B cell (primary cell): ENCODE measurements at regions of chr5 and their contacts with region 1.

Region 1: DNA sequence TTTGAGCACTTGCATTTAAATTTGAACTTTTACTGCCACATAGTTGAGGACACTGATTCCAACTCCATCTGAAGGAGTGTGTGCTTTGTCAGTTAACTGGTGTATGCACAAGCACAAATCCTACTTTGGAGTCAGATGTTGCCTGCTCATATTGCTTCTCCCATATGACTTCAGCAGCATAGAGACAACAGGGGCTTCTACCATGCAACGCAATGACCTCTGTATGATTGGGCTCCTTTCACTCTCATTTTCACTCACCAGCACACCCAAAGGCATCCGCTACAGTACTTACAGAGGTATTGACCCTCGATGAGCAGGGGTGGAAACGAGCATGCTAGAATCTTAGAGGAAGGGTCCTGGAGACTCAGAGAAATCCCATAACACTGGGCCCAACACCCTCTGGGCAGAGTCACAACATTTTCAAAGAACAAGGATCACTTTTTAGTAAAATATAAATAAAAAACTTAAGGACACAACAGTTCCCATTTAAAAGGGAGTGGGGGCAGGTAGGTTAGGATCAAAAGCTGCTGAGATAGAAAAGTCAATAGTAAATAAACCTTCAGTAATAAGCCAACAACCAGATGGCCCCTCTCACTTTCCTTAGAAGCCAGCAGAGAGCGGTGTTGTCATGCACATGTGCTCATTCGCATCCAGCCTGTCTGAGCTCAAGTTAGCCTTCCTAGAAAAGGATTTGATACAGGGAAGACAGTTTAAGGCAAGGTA is 203.8 kb downstream of the SNCAIP start:
- DNase-seq: peak; percentile 77
- ATAC-seq: peak; percentile 73
- H3K4me3 ChIP-seq: no peak overlapping the region
- H3K4me3 Mint-ChIP-seq: no peak overlapping the region
- H3K27ac ChIP-seq: no peak overlapping the region
- H3K27ac Mint-ChIP-seq: no peak overlapping the region
- H3K4me1 ChIP-seq: peaks cover 0 to 3% of the 10 kb centered on the region in 2 donors
- H3K4me1 Mint-ChIP-seq: peaks cover 4% of the 10 kb centered on the region
- H3K27me3 ChIP-seq: peaks cover 0 to 4% (median 0%) of the 10 kb centered on the region in 4 experiments
- H3K27me3 Mint-ChIP-seq: peaks cover 4% of the 10 kb centered on the region
- CTCF ChIP-seq: peak; percentile 89

Region 2: DNA sequence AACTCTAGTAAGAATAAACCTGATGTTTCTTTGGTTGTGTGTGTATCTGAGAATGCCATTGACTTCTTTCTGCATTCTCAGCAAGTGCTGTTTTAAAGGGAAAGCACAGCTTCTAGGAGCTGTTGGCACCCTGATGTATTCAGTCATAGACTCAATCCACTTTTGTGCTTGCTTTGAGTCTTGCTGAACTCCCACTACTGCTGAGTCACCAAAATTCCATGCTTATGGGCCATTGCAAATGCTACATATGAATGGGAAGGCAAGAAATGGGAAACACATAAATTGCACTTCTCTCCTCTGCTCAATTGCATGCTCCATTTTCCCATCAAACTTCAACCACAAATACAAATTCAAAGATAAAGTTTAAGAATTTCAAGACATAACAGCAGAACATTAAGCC is 674.0 kb before region 1 on chr5:
- CTCF ChIA-PET with region 1: no interaction called
- POLR2A ChIA-PET with region 1: no interaction called
- intact Hi-C with region 1: no loop called
- DNase-seq: no peak
- ATAC-seq: no peak
- H3K4me3 ChIP-seq: no peak overlapping the region
- H3K4me3 Mint-ChIP-seq: no peak overlapping the region
- H3K27ac ChIP-seq: no peak overlapping the region
- H3K27ac Mint-ChIP-seq: no peak overlapping the region
- H3K4me1 ChIP-seq: no peaks in the 10 kb centered on the region
- H3K4me1 Mint-ChIP-seq: no peaks in the 10 kb centered on the region
- H3K27me3 ChIP-seq: no peaks in the 10 kb centered on the region
- H3K27me3 Mint-ChIP-seq: no peaks in the 10 kb centered on the region
- CTCF ChIP-seq: no peak

Region 3: DNA sequence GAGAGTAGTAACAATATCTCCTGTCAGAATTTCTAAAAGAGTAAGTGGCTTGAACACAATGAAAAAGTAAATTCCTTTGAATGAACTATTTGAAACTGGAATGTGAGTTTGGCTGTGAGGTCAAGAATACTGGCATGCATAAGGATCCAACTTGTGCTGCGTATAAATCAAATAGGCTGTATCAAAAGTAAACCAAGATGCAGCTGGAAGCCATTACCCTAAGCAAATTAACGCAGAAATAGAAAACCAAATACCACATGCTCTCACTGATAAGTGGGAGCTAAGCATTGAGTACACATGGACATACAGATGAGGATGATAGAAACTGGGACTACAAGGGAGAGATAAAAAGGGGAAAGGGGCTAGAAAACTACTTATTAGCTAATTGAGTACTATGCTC is 578.1 kb before region 1 on chr5:
- CTCF ChIA-PET with region 1: no interaction called
- POLR2A ChIA-PET with region 1: no interaction called
- intact Hi-C with region 1: no loop called
- DNase-seq: no peak
- ATAC-seq: no peak
- H3K4me3 ChIP-seq: no peak overlapping the region
- H3K4me3 Mint-ChIP-seq: no peak overlapping the region
- H3K27ac ChIP-seq: no peak overlapping the region
- H3K27ac Mint-ChIP-seq: no peak overlapping the region
- H3K4me1 ChIP-seq: no peaks in the 10 kb centered on the region
- H3K4me1 Mint-ChIP-seq: no peaks in the 10 kb centered on the region
- H3K27me3 ChIP-seq: peaks cover 0 to 8% (median 0%) of the 10 kb centered on the region in 4 experiments
- H3K27me3 Mint-ChIP-seq: peaks cover 34% of the 10 kb centered on the region
- CTCF ChIP-seq: no peak

Region 4: DNA sequence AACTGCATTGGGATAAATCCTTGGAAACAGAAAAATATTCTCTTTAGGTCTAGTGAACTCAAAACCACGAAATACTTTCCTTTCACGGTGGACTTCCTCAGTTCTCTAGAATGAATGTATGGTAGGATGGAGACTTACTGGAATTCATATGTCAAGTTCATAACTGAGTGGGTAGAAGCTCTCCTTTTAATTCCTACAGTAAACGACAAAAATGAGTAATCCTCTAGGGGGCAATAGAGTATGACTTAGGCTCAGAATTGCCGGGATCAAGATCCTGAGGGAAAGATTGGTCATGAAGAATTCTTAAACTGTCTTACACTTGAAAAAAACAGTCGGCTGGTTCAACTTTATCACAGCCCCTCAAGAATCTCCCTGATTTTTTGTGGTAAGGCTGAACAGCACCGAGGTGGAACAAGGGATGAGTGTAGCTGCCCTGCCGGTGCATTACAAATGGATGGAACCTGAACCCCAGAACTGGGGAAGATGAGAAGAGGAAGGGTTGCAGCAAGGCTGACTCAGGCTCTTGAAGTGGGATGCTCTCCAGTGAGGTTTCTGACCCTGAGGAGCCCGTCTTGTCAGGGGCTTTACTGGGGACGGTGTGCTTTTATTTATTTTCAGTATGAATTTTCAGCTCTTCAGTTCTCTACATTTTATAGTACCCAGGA is 423.8 kb before region 1 on chr5:
- CTCF ChIA-PET with region 1: no interaction called
- POLR2A ChIA-PET with region 1: no interaction called
- intact Hi-C with region 1: no loop called
- DNase-seq: no peak
- ATAC-seq: no peak
- H3K4me3 ChIP-seq: no peak overlapping the region
- H3K4me3 Mint-ChIP-seq: no peak overlapping the region
- H3K27ac ChIP-seq: no peak overlapping the region
- H3K27ac Mint-ChIP-seq: no peak overlapping the region
- H3K4me1 ChIP-seq: no peaks in the 10 kb centered on the region
- H3K4me1 Mint-ChIP-seq: no peaks in the 10 kb centered on the region
- H3K27me3 ChIP-seq: peaks cover 0 to 3% (median 0%) of the 10 kb centered on the region in 4 experiments
- H3K27me3 Mint-ChIP-seq: peaks cover 14% of the 10 kb centered on the region
- CTCF ChIP-seq: no peak

Region 5: DNA sequence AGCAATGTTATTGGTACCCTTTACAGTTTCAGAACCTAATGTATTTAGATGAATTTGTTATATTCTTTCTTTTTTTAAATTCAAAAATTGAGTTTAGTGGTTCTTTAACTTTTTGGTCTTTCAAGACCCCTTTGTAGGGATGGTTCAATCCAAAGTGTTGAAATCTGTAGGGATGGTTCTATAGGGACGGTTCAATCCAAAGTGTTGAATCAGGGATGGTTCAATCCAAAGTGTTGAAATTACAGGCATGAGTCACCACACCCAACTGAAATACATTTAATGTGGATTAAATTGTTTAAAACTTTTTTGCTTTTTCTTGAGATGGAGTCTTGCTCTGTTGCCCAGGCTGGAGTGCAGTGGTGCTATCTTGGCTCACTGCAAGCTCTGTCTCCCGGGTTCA is 289.6 kb after region 1 on chr5:
- CTCF ChIA-PET with region 1: no interaction called
- POLR2A ChIA-PET with region 1: no interaction called
- intact Hi-C with region 1: loop called (anchors 2 kb)
- DNase-seq: no peak
- ATAC-seq: no peak
- H3K4me3 ChIP-seq: no peak overlapping the region
- H3K4me3 Mint-ChIP-seq: no peak overlapping the region
- H3K27ac ChIP-seq: no peak overlapping the region
- H3K27ac Mint-ChIP-seq: no peak overlapping the region
- H3K4me1 ChIP-seq: no peaks in the 10 kb centered on the region
- H3K4me1 Mint-ChIP-seq: peaks cover 12% of the 10 kb centered on the region
- H3K27me3 ChIP-seq: no peaks in the 10 kb centered on the region
- H3K27me3 Mint-ChIP-seq: no peaks in the 10 kb centered on the region
- CTCF ChIP-seq: no peak

Region 6: DNA sequence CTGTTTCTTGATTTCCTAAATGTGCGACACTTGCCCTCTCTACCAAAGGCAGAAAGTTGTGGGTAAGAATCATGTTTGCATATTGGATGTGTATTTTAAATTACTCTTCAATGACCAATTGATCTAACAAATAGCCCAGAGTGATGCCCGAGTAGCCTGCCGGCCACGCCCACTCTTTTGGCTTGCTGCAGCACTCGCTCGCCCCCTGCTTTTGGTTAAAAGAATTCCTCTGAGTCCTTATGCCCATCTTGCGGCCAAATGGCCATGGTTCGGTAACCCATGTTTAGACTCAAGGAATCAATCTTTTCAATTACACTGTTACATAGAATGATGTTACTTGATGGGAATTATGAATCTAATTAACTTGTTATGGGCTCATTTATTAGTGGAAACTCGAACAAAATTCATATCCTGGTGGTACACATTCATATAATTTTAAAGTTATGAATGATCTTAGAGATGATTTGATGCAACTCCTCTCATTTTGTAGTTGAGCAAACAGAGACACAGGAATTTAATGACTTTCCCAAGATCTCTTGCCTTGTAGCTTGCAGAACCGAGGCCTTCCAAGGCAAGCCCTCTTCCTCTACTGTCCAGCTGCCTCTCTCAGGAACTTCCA is 484.2 kb after region 1 on chr5:
- CTCF ChIA-PET with region 1: interaction called, 13 read pairs
- POLR2A ChIA-PET with region 1: no interaction called
- intact Hi-C with region 1: loop called (anchors 2 kb)
- DNase-seq: peak; percentile 64
- ATAC-seq: peak; percentile 73
- H3K4me3 ChIP-seq: no peak overlapping the region
- H3K4me3 Mint-ChIP-seq: no peak overlapping the region
- H3K27ac ChIP-seq: no peak overlapping the region
- H3K27ac Mint-ChIP-seq: no peak overlapping the region
- H3K4me1 ChIP-seq: no peaks in the 10 kb centered on the region
- H3K4me1 Mint-ChIP-seq: no peaks in the 10 kb centered on the region
- H3K27me3 ChIP-seq: no peaks in the 10 kb centered on the region
- H3K27me3 Mint-ChIP-seq: no peaks in the 10 kb centered on the region
- CTCF ChIP-seq: peak; percentile 72

Region 7: GRCh38 chr5:123344816-123345426 is 829.1 kb after region 1 on chr5:
- CTCF ChIA-PET with region 1: interaction called, 3 read pairs
- POLR2A ChIA-PET with region 1: no interaction called
- intact Hi-C with region 1: loop called (anchors 2 kb)
- DNase-seq: peak; percentile 17
- ATAC-seq: no peak
- H3K4me3 ChIP-seq: no peak overlapping the region
- H3K4me3 Mint-ChIP-seq: no peak overlapping the region
- H3K27ac ChIP-seq: no peak overlapping the region
- H3K27ac Mint-ChIP-seq: no peak overlapping the region
- H3K4me1 ChIP-seq: no peaks in the 10 kb centered on the region
- H3K4me1 Mint-ChIP-seq: peaks cover 12% of the 10 kb centered on the region
- H3K27me3 ChIP-seq: no peaks in the 10 kb centered on the region
- H3K27me3 Mint-ChIP-seq: no peaks in the 10 kb centered on the region
- CTCF ChIP-seq: peak; percentile 63